Activated B cell treated with CpG ODN at 0.5 μM for 24 hours (primary cell): ENCODE measurements at regions of chr10 and their contacts with region 1.

Region 1: GRCh38 chr10:90862908-90863514 is 5.2 kb upstream of the HTR7 start:
- DNase-seq: no peak
- ATAC-seq: no peak
- H3K4me3 Mint-ChIP-seq: no peak overlapping the region
- H3K27ac Mint-ChIP-seq: no peak overlapping the region
- H3K4me1 Mint-ChIP-seq: peaks cover 3% of the 10 kb centered on the region
- H3K27me3 Mint-ChIP-seq: peaks cover 23% of the 10 kb centered on the region
- CTCF ChIP-seq: peak; percentile 15

Region 2: GRCh38 chr10:90751107-90751997 is 111.7 kb before region 1 on chr10:
- CTCF ChIA-PET with region 1: interaction called, 18 read pairs
- POLR2A ChIA-PET with region 1: no interaction called
- intact Hi-C with region 1: loop called (anchors 1 kb)
- DNase-seq: no peak
- ATAC-seq: peak; percentile 54
- H3K4me3 Mint-ChIP-seq: no peak overlapping the region
- H3K27ac Mint-ChIP-seq: no peak overlapping the region
- H3K4me1 Mint-ChIP-seq: peaks cover 5% of the 10 kb centered on the region
- H3K27me3 Mint-ChIP-seq: peaks cover 13% of the 10 kb centered on the region
- CTCF ChIP-seq: no peak